ENCODE measurements at regions of chr10 and their contacts with region 1.

Region 1: GRCh38 chr10:29377333-29377961 is 88.6 kb downstream of the LYZL1 start:
- DNase-seq: peak in 2 of 9 experiments; percentile 23 to 34
- ATAC-seq: no peak
- H3K4me3 ChIP-seq: no peak overlapping the region
- H3K4me3 Mint-ChIP-seq: no peak overlapping the region
- H3K27ac ChIP-seq: no peak overlapping the region
- H3K27ac Mint-ChIP-seq: no peak overlapping the region
- H3K4me1 ChIP-seq: peaks cover 8% of the 10 kb centered on the region
- H3K4me1 Mint-ChIP-seq: peaks cover 10% of the 10 kb centered on the region
- H3K27me3 ChIP-seq: no peaks in the 10 kb centered on the region
- H3K27me3 Mint-ChIP-seq: peaks cover 2% of the 10 kb centered on the region
- CTCF ChIP-seq: peak; percentile 69

Region 2: DNA sequence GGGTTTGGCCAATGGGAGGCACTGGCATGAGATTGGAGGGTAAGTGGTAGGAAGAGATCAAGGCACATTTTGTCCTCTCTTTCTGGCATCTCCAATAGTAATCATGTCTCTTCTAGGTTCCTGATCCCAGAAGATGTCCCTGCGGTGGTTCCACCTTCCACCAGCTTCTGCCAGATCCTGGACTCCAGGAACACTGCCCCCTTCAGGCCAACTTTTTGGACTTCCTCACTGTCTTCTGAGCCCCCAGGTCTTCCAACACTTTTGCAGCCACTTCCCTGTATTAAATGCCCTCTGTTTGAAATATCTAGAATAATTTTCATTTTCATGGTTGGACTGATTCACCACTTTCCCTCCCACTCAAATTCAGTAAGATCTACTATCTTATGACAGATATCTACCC is 639.2 kb before region 1 on chr10:
- CTCF ChIA-PET with region 1: no interaction called
- POLR2A ChIA-PET with region 1: no interaction called
- intact Hi-C with region 1: no loop called
- DNase-seq: peak in 1 of 9 experiments; percentile 6
- ATAC-seq: no peak
- H3K4me3 ChIP-seq: no peak overlapping the region
- H3K4me3 Mint-ChIP-seq: no peak overlapping the region
- H3K27ac ChIP-seq: no peak overlapping the region
- H3K27ac Mint-ChIP-seq: no peak overlapping the region
- H3K4me1 ChIP-seq: no peaks in the 10 kb centered on the region
- H3K4me1 Mint-ChIP-seq: no peaks in the 10 kb centered on the region
- H3K27me3 ChIP-seq: no peaks in the 10 kb centered on the region
- H3K27me3 Mint-ChIP-seq: peaks cover 17% of the 10 kb centered on the region
- CTCF ChIP-seq: no peak

Region 3: DNA sequence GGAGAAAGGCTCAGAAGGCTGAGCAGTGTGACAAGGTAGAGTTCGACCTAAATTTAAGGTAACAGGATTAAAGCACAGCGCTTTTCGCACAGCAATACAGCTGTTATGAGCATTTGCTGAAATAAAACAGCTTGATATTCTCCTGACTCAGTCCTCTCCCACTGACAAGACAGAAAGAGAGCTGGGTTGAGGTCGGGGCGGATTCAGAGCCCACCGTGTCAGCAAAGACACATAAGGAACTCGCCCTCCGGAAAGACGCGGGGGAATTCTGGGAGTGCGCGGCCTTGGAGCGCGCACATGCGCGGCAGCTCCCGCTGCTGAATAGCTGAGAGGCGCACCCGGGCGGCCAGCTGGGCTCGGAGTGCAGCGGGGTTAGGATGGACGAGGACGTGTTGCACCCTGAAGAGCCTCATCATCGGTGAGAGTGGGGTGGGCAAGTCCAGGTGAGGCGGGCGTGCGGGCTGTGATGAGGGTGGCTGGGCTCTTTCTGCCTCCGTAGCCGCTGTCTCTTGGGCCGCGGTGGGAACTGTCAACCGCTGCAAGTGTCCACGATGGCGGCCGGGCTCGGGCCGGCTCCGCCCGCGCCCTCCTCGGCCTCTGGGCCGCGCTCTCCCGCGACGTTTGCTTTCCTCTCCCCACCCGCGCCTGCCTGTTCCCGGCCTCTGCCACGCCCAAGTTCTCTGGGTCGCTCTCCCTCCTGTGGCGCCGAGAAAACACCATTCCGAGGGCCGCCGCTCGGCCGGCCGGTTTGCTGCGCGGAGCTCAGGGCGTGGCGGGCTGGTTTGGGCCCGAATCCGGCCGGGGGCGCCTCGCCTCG is 32.0 kb after region 1 on chr10:
- CTCF ChIA-PET with region 1: no interaction called
- POLR2A ChIA-PET with region 1: no interaction called
- intact Hi-C with region 1: loop called in 1 of 2 experiments (anchors 2 kb)
- DNase-seq: peak in 8 of 9 experiments; percentile 20 to 66 (median 38)
- ATAC-seq: peak; percentile 62
- H3K4me3 ChIP-seq: peak overlapping the region; percentile 84 to 85
- H3K4me3 Mint-ChIP-seq: peak overlapping the region; percentile 96
- H3K27ac ChIP-seq: peak overlapping the region; percentile 47 to 60
- H3K27ac Mint-ChIP-seq: peak overlapping the region; percentile 92
- H3K4me1 ChIP-seq: peaks cover 6% of the 10 kb centered on the region
- H3K4me1 Mint-ChIP-seq: peaks cover 34% of the 10 kb centered on the region
- H3K27me3 ChIP-seq: no peaks in the 10 kb centered on the region
- H3K27me3 Mint-ChIP-seq: no peaks in the 10 kb centered on the region
- CTCF ChIP-seq: no peak

Region 4: GRCh38 chr10:29443745-29444523 is 66.5 kb after region 1 on chr10:
- CTCF ChIA-PET with region 1: interaction called, 15 read pairs
- POLR2A ChIA-PET with region 1: no interaction called
- intact Hi-C with region 1: no loop called
- DNase-seq: no peak
- ATAC-seq: no peak
- H3K4me3 ChIP-seq: no peak overlapping the region
- H3K4me3 Mint-ChIP-seq: no peak overlapping the region
- H3K27ac ChIP-seq: no peak overlapping the region
- H3K27ac Mint-ChIP-seq: no peak overlapping the region
- H3K4me1 ChIP-seq: no peaks in the 10 kb centered on the region
- H3K4me1 Mint-ChIP-seq: peaks cover 2% of the 10 kb centered on the region
- H3K27me3 ChIP-seq: no peaks in the 10 kb centered on the region
- H3K27me3 Mint-ChIP-seq: no peaks in the 10 kb centered on the region
- CTCF ChIP-seq: no peak

Region 5: GRCh38 chr10:29455095-29455494 is 77.6 kb after region 1 on chr10:
- CTCF ChIA-PET with region 1: interaction called, 4 read pairs
- POLR2A ChIA-PET with region 1: no interaction called
- intact Hi-C with region 1: loop called in 1 of 2 experiments (anchors 1 kb)
- DNase-seq: no peak
- ATAC-seq: no peak
- H3K4me3 ChIP-seq: no peak overlapping the region
- H3K4me3 Mint-ChIP-seq: no peak overlapping the region
- H3K27ac ChIP-seq: no peak overlapping the region
- H3K27ac Mint-ChIP-seq: peak overlapping the region; percentile 11
- H3K4me1 ChIP-seq: no peaks in the 10 kb centered on the region
- H3K4me1 Mint-ChIP-seq: no peaks in the 10 kb centered on the region
- H3K27me3 ChIP-seq: no peaks in the 10 kb centered on the region
- H3K27me3 Mint-ChIP-seq: no peaks in the 10 kb centered on the region
- CTCF ChIP-seq: no peak

Region 6: DNA sequence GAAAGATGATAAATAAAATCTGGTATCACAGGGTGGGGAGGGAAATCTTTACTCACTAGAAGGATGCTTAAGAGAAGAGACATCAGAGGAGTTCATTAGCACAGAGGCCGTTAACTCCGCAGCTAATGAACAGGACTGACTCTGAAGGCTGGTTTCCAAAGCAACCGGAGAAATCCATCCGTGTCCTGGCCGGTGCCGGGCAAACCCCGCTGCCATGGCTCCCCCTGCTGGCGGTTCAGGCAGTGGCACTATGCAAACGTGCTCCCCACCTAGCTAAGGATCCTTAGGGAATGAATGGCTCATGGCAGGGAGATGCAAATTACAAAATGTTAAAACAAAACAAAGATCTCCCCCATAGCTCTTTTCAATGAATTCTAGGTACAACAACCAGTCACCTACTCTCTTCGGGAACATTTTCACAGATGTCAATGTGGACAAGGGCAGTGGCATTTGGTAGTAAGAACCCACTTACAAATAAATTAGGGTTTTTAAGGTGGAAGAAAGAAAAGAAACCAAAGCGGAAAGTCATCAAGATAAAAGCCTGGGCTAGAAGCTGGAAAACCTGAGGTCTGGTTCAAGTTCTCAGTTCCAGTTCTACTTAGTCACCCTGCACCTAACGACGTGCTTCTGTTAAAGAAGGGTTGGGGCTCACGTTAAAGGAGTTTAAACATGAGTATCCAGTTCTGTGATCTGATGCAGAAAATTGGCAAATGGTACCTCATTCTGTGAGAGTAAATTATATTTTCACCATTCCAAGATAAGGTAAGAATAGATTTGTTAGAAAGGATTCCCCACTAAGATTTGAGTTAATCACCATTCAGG is 119.1 kb after region 1 on chr10:
- CTCF ChIA-PET with region 1: interaction called, 16 read pairs
- POLR2A ChIA-PET with region 1: no interaction called
- intact Hi-C with region 1: loop called in 1 of 2 experiments (anchors 5 kb)
- DNase-seq: peak; percentile 21 to 73 (median 45)
- ATAC-seq: no peak
- H3K4me3 ChIP-seq: no peak overlapping the region
- H3K4me3 Mint-ChIP-seq: no peak overlapping the region
- H3K27ac ChIP-seq: no peak overlapping the region
- H3K27ac Mint-ChIP-seq: no peak overlapping the region
- H3K4me1 ChIP-seq: no peaks in the 10 kb centered on the region
- H3K4me1 Mint-ChIP-seq: peaks cover 2% of the 10 kb centered on the region
- H3K27me3 ChIP-seq: no peaks in the 10 kb centered on the region
- H3K27me3 Mint-ChIP-seq: no peaks in the 10 kb centered on the region
- CTCF ChIP-seq: peak; percentile 96

Region 7: DNA sequence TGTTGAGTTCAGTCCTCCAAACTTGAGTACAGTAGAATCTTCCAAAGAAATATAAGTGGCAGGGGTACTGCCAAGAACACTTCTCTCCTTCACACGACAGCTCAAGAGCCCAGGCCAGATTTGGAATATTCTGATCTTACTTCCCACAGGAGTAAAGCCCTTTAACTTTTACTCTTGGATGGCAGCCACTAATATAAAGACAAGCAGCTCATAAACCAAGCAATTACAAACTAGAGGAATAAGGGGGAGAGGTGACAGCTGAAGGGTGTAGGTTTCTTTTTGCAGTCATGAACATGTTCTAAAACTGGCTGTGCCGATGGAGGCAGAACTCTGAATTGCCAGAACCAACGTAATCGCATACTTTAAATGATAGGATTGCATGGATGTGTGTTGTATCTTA is 182.5 kb after region 1 on chr10:
- CTCF ChIA-PET with region 1: no interaction called
- POLR2A ChIA-PET with region 1: no interaction called
- intact Hi-C with region 1: no loop called
- DNase-seq: no peak
- ATAC-seq: no peak
- H3K4me3 ChIP-seq: no peak overlapping the region
- H3K4me3 Mint-ChIP-seq: no peak overlapping the region
- H3K27ac ChIP-seq: no peak overlapping the region
- H3K27ac Mint-ChIP-seq: peak overlapping the region; percentile 5
- H3K4me1 ChIP-seq: no peaks in the 10 kb centered on the region
- H3K4me1 Mint-ChIP-seq: no peaks in the 10 kb centered on the region
- H3K27me3 ChIP-seq: no peaks in the 10 kb centered on the region
- H3K27me3 Mint-ChIP-seq: no peaks in the 10 kb centered on the region
- CTCF ChIP-seq: no peak